ENCODE measurements at regions of chr16 and their contacts with region 1.

Region 1: DNA sequence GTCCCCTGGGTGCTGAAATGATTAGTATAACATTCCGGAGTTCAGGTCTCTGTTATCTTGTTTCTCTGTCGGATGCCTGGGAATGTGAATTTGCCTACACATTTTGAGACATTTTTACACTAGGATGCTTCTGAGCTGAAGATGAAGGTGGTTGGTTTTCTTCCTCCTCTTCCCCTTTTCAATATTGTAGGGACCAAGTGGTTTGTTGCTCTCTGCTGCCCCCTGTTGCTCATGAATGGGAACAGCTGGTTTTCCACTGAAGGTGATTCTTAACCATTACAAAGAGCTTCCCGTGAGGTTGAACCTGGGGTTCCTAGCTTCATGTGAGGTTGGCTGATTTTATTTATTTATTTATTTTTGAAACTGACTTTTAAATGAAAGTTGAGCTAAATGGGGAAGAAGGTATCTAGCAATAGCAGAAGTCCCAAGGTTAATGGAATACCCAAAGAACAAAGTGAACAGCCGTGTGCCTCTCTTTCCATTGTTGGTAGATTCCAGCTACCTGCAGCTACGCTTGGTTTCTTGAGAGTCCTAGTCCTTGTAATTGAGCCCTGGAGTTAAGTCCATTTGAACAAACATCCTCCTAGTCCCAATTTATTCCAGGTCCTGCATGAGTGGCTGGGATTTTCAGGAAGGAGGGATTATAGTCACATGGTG is 983.9 kb upstream of the EEF2KMT start:
- DNase-seq: peak; percentile 15 to 86
- H3K4me3 ChIP-seq: no peak overlapping the region
- H3K27ac ChIP-seq: no peak overlapping the region
- H3K4me1 ChIP-seq: peaks cover 0 to 2% (median under 1%) of the 10 kb centered on the region in 4 experiments; a peak in 2 of 7 replicates
- H3K27me3 ChIP-seq: no peaks in the 10 kb centered on the region
- CTCF ChIP-seq: peak; percentile 17 to 85 (median 76)
- EP300 ChIP-seq: no peak
- POLR2A ChIP-seq: no peak
- RAD21 ChIP-seq: peak; percentile 84 to 87

Region 2: GRCh38 chr16:5801396-5801795 is 280.1 kb before region 1 on chr16:
- CTCF ChIA-PET with region 1: no interaction called
- POLR2A ChIA-PET with region 1: no interaction called
- DNase-seq: no peak
- H3K4me3 ChIP-seq: no peak overlapping the region
- H3K27ac ChIP-seq: no peak overlapping the region
- H3K4me1 ChIP-seq: 0 out of 7 replicates have a peak, but pooled peaks cover 0 to under 1% (median 0%) of the 10 kb centered on the region in 4 experiments
- H3K27me3 ChIP-seq: no peaks in the 10 kb centered on the region; a peak in 1 of 7 replicates
- CTCF ChIP-seq: no peak
- EP300 ChIP-seq: no peak
- POLR2A ChIP-seq: no peak
- RAD21 ChIP-seq: no peak

Region 3: DNA sequence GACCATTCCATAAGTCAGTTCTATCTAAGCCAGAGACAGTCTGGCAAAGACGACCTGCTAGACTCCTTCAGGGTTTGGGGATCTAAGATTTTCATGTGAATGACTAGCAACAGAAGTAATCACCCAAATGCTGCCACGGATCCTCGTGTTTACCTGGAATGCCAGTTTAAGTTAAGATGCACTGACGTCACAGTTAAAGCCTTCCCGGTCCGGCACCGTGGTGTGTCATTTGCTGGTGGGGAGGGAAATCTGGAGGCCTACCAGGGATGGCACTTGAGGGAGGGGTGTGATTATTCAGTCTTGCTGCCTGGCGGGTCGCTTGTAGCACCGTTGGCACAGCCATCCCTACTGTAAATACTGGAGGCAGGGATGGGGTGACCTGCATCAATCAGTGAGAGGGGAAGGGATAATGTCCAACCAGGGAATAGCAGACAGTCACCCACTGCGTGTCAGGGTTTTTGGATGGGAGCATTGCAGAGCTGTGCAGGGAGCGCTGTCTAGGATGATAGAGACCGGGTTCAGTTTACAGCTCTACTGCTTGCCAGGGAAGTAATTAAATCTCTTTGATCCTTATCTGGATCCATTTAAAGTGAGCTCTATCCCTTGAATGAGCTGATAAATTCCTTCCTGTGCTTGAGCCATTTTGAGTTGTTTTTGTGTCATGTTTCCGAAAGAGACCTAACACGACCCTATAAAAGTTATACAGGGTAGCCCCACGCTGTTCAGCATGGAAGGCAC is 219.2 kb before region 1 on chr16:
- CTCF ChIA-PET with region 1: no interaction called
- POLR2A ChIA-PET with region 1: no interaction called
- DNase-seq: no peak
- H3K4me3 ChIP-seq: no peak overlapping the region
- H3K27ac ChIP-seq: no peak overlapping the region
- H3K4me1 ChIP-seq: peaks cover 0 to 12% (median 7%) of the 10 kb centered on the region in 4 experiments; a peak in 3 of 7 replicates
- H3K27me3 ChIP-seq: no peaks in the 10 kb centered on the region; a peak in 1 of 7 replicates
- CTCF ChIP-seq: no peak
- EP300 ChIP-seq: no peak
- POLR2A ChIP-seq: no peak
- RAD21 ChIP-seq: no peak

Region 4: GRCh38 chr16:5918567-5919127 is 162.8 kb before region 1 on chr16:
- CTCF ChIA-PET with region 1: interaction called, 21 read pairs
- POLR2A ChIA-PET with region 1: no interaction called
- DNase-seq: peak in 1 of 2 experiments; percentile 78
- H3K4me3 ChIP-seq: no peak overlapping the region
- H3K27ac ChIP-seq: no peak overlapping the region
- H3K4me1 ChIP-seq: peaks cover 3 to 16% (median 6%) of the 10 kb centered on the region in 4 experiments; a peak in 6 of 7 replicates
- H3K27me3 ChIP-seq: 0 out of 7 replicates have a peak, but pooled peaks cover 0 to 3% (median 0%) of the 10 kb centered on the region in 4 experiments
- CTCF ChIP-seq: peak; percentile 81 to 92 (median 86)
- EP300 ChIP-seq: no peak
- POLR2A ChIP-seq: no peak
- RAD21 ChIP-seq: peak; percentile 75 to 82

Region 5: GRCh38 chr16:6032438-6032837 is 49.0 kb before region 1 on chr16:
- CTCF ChIA-PET with region 1: interaction called, 14 read pairs
- POLR2A ChIA-PET with region 1: no interaction called
- DNase-seq: no peak
- H3K4me3 ChIP-seq: no peak overlapping the region
- H3K27ac ChIP-seq: no peak overlapping the region
- H3K4me1 ChIP-seq: no peaks in the 10 kb centered on the region
- H3K27me3 ChIP-seq: no peaks in the 10 kb centered on the region
- CTCF ChIP-seq: no peak
- EP300 ChIP-seq: no peak
- POLR2A ChIP-seq: no peak
- RAD21 ChIP-seq: peak; percentile 30 to 33

Region 6: GRCh38 chr16:6105115-6105514 is 23.7 kb after region 1 on chr16:
- CTCF ChIA-PET with region 1: interaction called, 10 read pairs
- POLR2A ChIA-PET with region 1: no interaction called
- DNase-seq: no peak
- H3K4me3 ChIP-seq: no peak overlapping the region
- H3K27ac ChIP-seq: no peak overlapping the region
- H3K4me1 ChIP-seq: peaks cover 0 to 3% (median 0%) of the 10 kb centered on the region in 4 experiments; a peak in 1 of 7 replicates
- H3K27me3 ChIP-seq: no peaks in the 10 kb centered on the region; a peak in 1 of 7 replicates
- CTCF ChIP-seq: no peak
- EP300 ChIP-seq: no peak
- POLR2A ChIP-seq: no peak
- RAD21 ChIP-seq: no peak

Region 7: DNA sequence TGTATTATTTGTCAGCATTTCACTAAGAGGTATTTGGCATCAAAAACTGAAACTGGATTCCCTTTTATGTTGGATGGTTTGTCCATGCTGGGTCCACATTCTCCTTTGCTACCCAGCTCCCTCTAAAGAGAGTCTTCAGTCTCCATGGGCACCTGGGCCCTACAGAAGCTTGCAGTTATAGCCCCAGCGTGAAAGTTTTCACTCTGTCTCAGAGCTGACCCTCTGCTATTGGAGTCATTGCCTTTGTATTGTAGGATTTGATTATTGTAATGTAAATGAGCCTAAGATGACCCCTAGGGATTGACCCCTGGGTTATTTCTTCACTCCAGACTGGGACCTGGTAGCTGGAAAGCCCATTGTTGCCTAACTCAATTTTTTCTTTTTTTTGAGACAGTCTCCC is 42.7 kb after region 1 on chr16:
- CTCF ChIA-PET with region 1: no interaction called
- POLR2A ChIA-PET with region 1: no interaction called
- DNase-seq: no peak
- H3K4me3 ChIP-seq: no peak overlapping the region
- H3K27ac ChIP-seq: no peak overlapping the region
- H3K4me1 ChIP-seq: peaks cover 0 to 9% (median 0%) of the 10 kb centered on the region in 4 experiments; a peak in 2 of 7 replicates
- H3K27me3 ChIP-seq: no peaks in the 10 kb centered on the region
- CTCF ChIP-seq: no peak
- EP300 ChIP-seq: no peak
- POLR2A ChIP-seq: no peak
- RAD21 ChIP-seq: no peak

Region 8: GRCh38 chr16:6165330-6165979 is 84.0 kb after region 1 on chr16:
- CTCF ChIA-PET with region 1: interaction called, 11 read pairs
- POLR2A ChIA-PET with region 1: no interaction called
- DNase-seq: no peak
- H3K4me3 ChIP-seq: no peak overlapping the region
- H3K27ac ChIP-seq: no peak overlapping the region
- H3K4me1 ChIP-seq: peaks cover 0 to 8% (median 7%) of the 10 kb centered on the region in 4 experiments; a peak in 5 of 7 replicates
- H3K27me3 ChIP-seq: no peaks in the 10 kb centered on the region
- CTCF ChIP-seq: peak in 1 of 3 experiments; percentile 26; a peak in 2 of 4 replicates
- EP300 ChIP-seq: no peak
- POLR2A ChIP-seq: no peak
- RAD21 ChIP-seq: peak; percentile 28 to 45; a peak in 3 of 4 replicates